Activated T-helper 1 cell treated with anti-CD3 and anti-CD28 coated beads, Interleukin-12 subunit alpha, Interleukin-12 subunit beta, Interleukin-2, Interleukin-4 antibody, amounts not matched to agents 30 ng/mL and 10 ng/mL and 1 ng/mL, durations not matched to agents 14 hours and 24 hours and 36 hours (primary cell): ENCODE measurements at regions of chrX and their contacts with region 1.

Region 1: GRCh38 chrX:130091958-130092522 is 18.3 kb downstream of the ELF4 start:
- DNase-seq: peak; percentile 79
- H3K4me3 Mint-ChIP-seq: peak overlapping the region; percentile 83
- H3K27ac Mint-ChIP-seq: peak overlapping the region; percentile 94
- H3K4me1 Mint-ChIP-seq: peaks cover 29% of the 10 kb centered on the region
- H3K27me3 Mint-ChIP-seq: no peaks in the 10 kb centered on the region

Region 2: DNA sequence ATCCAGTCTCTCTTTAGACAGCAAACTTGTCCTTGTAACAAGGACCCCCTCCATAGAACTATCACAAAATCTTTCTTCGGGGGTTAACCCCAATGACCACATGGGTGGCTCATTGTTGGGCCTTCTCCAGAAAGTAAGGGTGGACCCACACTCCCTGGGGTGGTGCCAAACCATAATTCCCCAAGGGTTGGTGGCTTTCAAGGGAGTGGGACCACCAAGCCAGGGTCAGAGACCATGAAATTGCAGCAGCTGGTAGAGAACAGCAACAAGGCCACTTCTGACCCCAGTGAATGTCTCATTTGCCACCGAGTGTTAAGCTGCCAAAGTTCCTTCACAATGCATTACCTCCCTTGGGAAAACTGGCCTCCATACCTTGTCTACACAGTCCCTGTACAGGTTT is 219.5 kb before region 1 on chrX:
- intact Hi-C with region 1: no loop called
- DNase-seq: no peak
- H3K4me3 Mint-ChIP-seq: no peak overlapping the region
- H3K27ac Mint-ChIP-seq: no peak overlapping the region
- H3K4me1 Mint-ChIP-seq: no peaks in the 10 kb centered on the region
- H3K27me3 Mint-ChIP-seq: peaks cover 12% of the 10 kb centered on the region

Region 3: GRCh38 chrX:130110379-130111219 is 18.6 kb after region 1 on chrX and contains the start of gene ELF4:
- intact Hi-C with region 1: loop called (anchors 1 kb)
- DNase-seq: peak; percentile 38
- H3K4me3 Mint-ChIP-seq: peak within 1 kb of the TSS; percentile 93
- H3K27ac Mint-ChIP-seq: peak within 1 kb of the TSS; percentile 92
- H3K4me1 Mint-ChIP-seq: peaks cover 21% of the 10 kb centered on the region
- H3K27me3 Mint-ChIP-seq: no peaks in the 10 kb centered on the region
- total RNA-seq, gene ELF4: 26.1 and 26.6 TPM in 2 replicates